ENCODE measurements at regions of chr4 and their contacts with region 1.

Region 1: DNA sequence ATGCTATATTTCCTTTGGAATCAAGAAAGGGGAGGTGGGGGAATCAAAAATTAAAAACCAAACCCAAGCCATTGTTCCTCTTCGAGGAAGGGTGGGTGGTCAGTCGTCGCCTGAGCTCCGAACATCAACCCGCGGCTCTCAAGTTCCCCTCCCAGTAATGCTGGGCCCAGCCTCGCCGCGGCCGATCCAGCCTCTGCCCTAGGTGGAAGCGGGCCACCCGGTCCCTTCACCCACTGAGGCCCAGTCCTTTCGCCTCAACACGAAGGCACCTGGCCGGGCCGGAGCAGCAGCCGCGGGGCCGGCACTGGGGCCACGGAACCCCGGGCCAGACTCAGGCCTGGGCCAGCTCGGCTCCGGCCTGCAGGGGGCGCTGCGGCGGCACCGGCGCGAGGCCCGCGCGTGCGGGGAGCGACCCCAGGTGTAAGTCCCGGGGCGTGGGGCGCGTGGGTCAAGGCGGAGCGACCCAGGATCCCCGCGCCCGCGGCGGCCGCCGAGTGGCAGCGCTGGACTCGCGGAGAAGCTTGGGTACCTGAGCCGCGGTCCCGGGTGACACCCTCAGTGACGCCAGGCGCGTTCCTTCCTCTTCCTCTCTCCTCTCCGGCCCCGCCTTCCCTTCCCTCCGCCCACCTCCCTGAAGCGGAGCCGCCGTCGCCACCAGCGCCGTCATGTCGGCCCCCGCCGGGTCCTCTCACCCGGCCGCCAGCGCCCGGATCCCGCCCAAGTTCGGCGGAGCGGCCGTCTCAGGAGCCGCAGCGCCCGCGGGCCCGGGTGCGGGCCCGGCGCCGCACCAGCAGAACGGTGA is at the start of gene SEC24B:
- DNase-seq: peak; percentile 84
- H3K4me3 ChIP-seq: peak within 1 kb of the TSS; percentile 59 to 96 (median 92)
- H3K27ac ChIP-seq: peak within 1 kb of the TSS; percentile 93
- H3K4me1 ChIP-seq: peaks cover 44% of the 10 kb centered on the region
- H3K27me3 ChIP-seq: no peaks in the 10 kb centered on the region
- CTCF ChIP-seq: peak; percentile 70 to 97
- POLR2A ChIP-seq: peak; percentile 94
- total RNA-seq, gene SEC24B: 34.6 and 35.9 TPM in 2 replicates

Region 2: GRCh38 chr4:109559983-109560686 is 126.7 kb after region 1 on chr4 and contains the start of gene MCUB:
- CTCF ChIA-PET with region 1: interaction called, 7 read pairs
- POLR2A ChIA-PET with region 1: interaction called, 8 read pairs
- dilution Hi-C with region 1: no loop called
- intact Hi-C with region 1: loop called (anchors 1 kb)
- DNase-seq: peak; percentile 85
- H3K4me3 ChIP-seq: peak within 1 kb of the TSS; percentile 73 to 93 (median 90)
- H3K27ac ChIP-seq: peak within 1 kb of the TSS; percentile 94
- H3K4me1 ChIP-seq: peaks cover 16% of the 10 kb centered on the region
- H3K27me3 ChIP-seq: no peaks in the 10 kb centered on the region
- CTCF ChIP-seq: no peak
- POLR2A ChIP-seq: no peak
- total RNA-seq, gene MCUB: 32.5 and 35.2 TPM in 2 replicates

Region 3: GRCh38 chr4:109658871-109659410 is 225.5 kb after region 1 on chr4:
- CTCF ChIA-PET with region 1: interaction called, 21 read pairs
- POLR2A ChIA-PET with region 1: no interaction called
- dilution Hi-C with region 1: no loop called
- intact Hi-C with region 1: no loop called
- DNase-seq: peak; percentile 45
- H3K4me3 ChIP-seq: no peak overlapping the region
- H3K27ac ChIP-seq: no peak overlapping the region
- H3K4me1 ChIP-seq: no peaks in the 10 kb centered on the region
- H3K27me3 ChIP-seq: no peaks in the 10 kb centered on the region
- CTCF ChIP-seq: no peak
- POLR2A ChIP-seq: no peak

Region 4: GRCh38 chr4:109803924-109804571 is 370.6 kb after region 1 on chr4:
- CTCF ChIA-PET with region 1: interaction called, 22 read pairs
- POLR2A ChIA-PET with region 1: no interaction called
- dilution Hi-C with region 1: no loop called
- intact Hi-C with region 1: no loop called
- DNase-seq: peak; percentile 56
- H3K4me3 ChIP-seq: no peak overlapping the region
- H3K27ac ChIP-seq: no peak overlapping the region
- H3K4me1 ChIP-seq: peaks cover 12% of the 10 kb centered on the region
- H3K27me3 ChIP-seq: no peaks in the 10 kb centered on the region
- CTCF ChIP-seq: peak; percentile 27 to 34
- POLR2A ChIP-seq: no peak

Region 5: DNA sequence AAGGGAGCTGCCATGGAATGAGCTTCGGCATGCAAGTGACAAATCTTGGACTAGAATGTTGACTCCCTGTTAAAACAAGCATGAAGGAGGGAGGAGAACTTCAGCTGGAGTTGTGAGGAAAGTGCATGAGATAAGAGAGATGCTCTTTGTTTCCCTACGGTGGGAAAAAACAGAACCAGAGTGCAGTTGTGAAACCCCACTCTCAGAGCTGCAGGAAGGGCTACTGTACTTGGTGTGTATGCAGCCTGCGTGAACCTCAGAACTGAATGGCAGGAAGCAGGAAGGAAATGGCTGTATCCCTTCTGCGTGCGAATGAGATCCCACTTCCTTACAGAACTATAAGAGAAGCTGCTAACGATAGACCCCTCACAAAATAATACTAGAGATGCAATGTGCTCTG is 536.5 kb after region 1 on chr4:
- CTCF ChIA-PET with region 1: interaction called, 12 read pairs
- POLR2A ChIA-PET with region 1: no interaction called
- dilution Hi-C with region 1: no loop called
- intact Hi-C with region 1: no loop called
- DNase-seq: peak; percentile 75
- H3K4me3 ChIP-seq: peak overlapping the region in 1 of 3 experiments; percentile 4
- H3K27ac ChIP-seq: peak overlapping the region; percentile 60
- H3K4me1 ChIP-seq: peaks cover 26% of the 10 kb centered on the region
- H3K27me3 ChIP-seq: no peaks in the 10 kb centered on the region
- CTCF ChIP-seq: no peak
- POLR2A ChIP-seq: no peak